Heart right ventricle (tissue), 16 donors: ENCODE measurements at regions of chr2 and their contacts with region 1.

Region 1: GRCh38 chr2:101160454-101160853 is 9.3 kb upstream of the TBC1D8 start:
- DNase-seq: no peak
- ATAC-seq: peak in 4 of 8 donors; percentile 52 to 65 (median 59)
- H3K4me3 ChIP-seq: no peak overlapping the region
- H3K27ac ChIP-seq: no peak overlapping the region
- H3K4me1 ChIP-seq: peaks cover 0 to 6% (median 0%) of the 10 kb centered on the region in 9 donors
- H3K27me3 ChIP-seq: no peaks in the 10 kb centered on the region
- CTCF ChIP-seq: no peak

Region 2: GRCh38 chr2:101036562-101037457 is 123.6 kb before region 1 on chr2:
- intact Hi-C with region 1: loop called in 1 of 10 experiments (anchors 1 kb)
- DNase-seq: no peak
- ATAC-seq: no peak
- H3K4me3 ChIP-seq: no peak overlapping the region
- H3K27ac ChIP-seq: no peak overlapping the region
- H3K4me1 ChIP-seq: peaks cover 0 to 27% (median 4%) of the 10 kb centered on the region in 9 donors
- H3K27me3 ChIP-seq: no peaks in the 10 kb centered on the region
- CTCF ChIP-seq: peak in 8 of 9 donors; percentile 13 to 63 (median 52)

Region 3: DNA sequence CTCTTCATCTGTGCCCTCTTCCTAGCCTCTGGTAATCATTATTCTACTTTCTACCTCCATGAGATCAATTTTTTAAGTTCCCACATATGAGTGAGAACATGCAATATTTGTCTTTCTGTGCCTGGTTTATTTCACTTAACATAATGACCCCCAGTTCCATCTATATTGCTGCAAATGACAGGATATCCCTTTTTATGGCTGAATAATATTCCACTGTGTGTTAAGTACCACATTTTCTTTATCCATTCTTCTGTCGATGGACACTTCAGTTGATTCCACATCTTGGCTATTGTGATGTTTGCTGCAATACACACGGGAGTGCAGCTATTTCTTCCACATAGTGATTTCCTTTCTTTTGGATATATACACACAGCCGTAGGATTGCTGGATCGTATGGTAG is 48.4 kb after region 1 on chr2:
- intact Hi-C with region 1: no loop called
- DNase-seq: no peak
- ATAC-seq: no peak
- H3K4me3 ChIP-seq: no peak overlapping the region
- H3K27ac ChIP-seq: no peak overlapping the region
- H3K4me1 ChIP-seq: peaks cover 0 to 6% (median 0%) of the 10 kb centered on the region in 9 donors
- H3K27me3 ChIP-seq: no peaks in the 10 kb centered on the region
- CTCF ChIP-seq: no peak